Naive thymus-derived CD4-positive, alpha-beta T cell (primary cell): ENCODE measurements at regions of chr10 and their contacts with region 1.

Region 1: DNA sequence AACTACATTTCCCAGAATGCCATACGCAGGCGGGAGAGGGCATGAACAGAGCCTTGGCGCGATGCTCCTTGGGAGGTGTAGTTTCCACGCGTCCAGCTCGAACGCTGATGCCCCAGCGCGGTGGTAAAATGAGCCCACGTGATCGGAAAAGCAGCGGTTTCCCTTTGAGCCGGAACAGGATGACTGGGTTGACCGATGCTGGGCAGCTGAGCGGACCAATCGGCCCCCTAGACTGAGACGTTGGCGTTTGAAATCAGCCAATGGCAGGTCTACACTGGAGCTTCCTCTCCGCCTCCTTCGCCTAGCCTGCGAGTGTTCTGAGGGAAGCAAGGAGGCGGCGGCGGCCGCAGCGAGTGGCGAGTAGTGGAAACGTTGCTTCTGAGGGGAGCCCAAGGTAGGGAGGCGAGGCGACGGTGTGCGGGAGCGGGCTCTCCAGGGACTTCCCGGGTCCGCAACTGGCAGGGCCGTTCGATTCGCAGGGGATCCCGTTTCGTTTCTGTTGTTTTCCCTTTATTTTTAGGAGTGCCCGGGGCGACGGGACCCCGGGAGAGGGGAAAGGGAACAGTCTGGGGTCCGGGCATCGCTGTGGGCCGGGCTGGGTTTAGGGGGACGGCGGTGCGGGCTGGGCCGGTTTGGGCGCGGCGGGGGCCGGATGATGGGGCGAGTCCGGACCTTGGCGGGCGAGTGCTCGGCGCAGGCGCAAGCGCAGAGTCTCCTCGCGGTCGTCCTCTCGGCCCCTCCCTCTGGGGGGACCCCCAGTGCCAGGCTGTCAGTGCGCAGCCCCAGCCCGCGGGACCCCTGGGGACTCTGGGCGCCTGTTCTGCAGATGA is at the start of gene BUB3:
- DNase-seq: peak; percentile 72 to 96 (median 94)
- ATAC-seq: peak; percentile 95
- H3K4me3 ChIP-seq: peak within 1 kb of the TSS; percentile 92
- H3K4me3 Mint-ChIP-seq: peak within 1 kb of the TSS; percentile 93 to 100 (median 99)
- H3K27ac ChIP-seq: peak within 1 kb of the TSS; percentile 80
- H3K27ac Mint-ChIP-seq: peak within 1 kb of the TSS; percentile 85 to 100 (median 96)
- H3K4me1 ChIP-seq: peaks cover 28 to 66% of the 10 kb centered on the region in 2 donors
- H3K4me1 Mint-ChIP-seq: peaks cover 35 to 85% (median 75%) of the 10 kb centered on the region in 7 donors
- H3K27me3 ChIP-seq: peaks cover 4 to 5% of the 10 kb centered on the region in 2 donors
- H3K27me3 Mint-ChIP-seq: peaks cover under 1 to 30% (median 7%) of the 10 kb centered on the region in 5 donors
- total RNA-seq, gene BUB3: 91.4 to 195 (median 171) TPM

Region 2: DNA sequence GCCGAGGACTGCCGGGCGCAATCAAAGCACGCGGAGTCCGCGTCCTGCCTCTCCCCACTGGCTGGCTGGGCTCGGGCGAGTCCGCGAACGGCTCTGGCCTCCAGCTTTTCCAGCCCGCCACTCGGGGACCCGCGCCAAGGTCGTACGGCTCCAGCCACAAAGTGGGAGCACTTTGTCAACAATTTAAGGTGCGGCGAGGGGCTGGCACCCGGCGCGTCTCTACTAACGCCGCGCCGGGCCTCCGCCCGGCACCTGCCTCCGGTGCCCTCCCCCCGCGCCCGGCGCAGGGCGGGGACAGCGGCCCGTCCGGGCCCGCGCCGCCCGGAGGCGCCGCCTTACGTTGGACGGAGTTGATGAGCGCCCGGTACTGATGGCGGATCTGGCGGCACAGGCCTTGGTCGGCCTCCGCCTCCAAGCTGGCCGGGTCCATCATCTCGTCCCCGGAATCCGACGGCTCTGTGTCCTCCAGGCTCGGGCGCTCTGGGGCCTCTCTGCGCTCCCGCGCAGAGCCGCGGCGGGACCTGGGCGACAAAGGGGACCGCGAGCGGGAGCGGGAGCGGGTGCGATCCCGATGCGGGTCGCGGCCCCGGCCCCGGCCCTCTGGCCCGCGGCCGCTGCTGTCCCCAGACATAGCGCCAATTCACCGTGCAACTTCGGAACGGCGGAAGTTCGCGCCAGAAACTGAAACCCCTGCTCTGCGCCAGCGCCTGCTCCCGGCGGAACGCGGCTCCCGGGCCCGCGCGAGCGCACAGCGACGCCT is 1179.6 kb before region 1 on chr10 and contains the start of gene NSMCE4A:
- CTCF ChIA-PET with region 1: no interaction called
- POLR2A ChIA-PET with region 1: no interaction called
- intact Hi-C with region 1: loop called in 1 of 2 experiments (anchors 5 kb)
- DNase-seq: peak; percentile 47 to 81 (median 62)
- ATAC-seq: peak; percentile 90
- H3K4me3 ChIP-seq: peak within 1 kb of the TSS; percentile 86
- H3K4me3 Mint-ChIP-seq: peak within 1 kb of the TSS; percentile 72 to 86 (median 81)
- H3K27ac ChIP-seq: peak within 1 kb of the TSS; percentile 74
- H3K27ac Mint-ChIP-seq: peak within 1 kb of the TSS in 6 of 9 donors; percentile 36 to 77 (median 60)
- H3K4me1 ChIP-seq: peaks cover 6 to 11% of the 10 kb centered on the region in 2 donors
- H3K4me1 Mint-ChIP-seq: peaks cover 15 to 35% (median 22%) of the 10 kb centered on the region in 7 donors
- H3K27me3 ChIP-seq: no peaks in the 10 kb centered on the region
- H3K27me3 Mint-ChIP-seq: no peaks in the 10 kb centered on the region
- total RNA-seq, gene NSMCE4A: 34.7 to 87.2 (median 69.4) TPM

Region 3: DNA sequence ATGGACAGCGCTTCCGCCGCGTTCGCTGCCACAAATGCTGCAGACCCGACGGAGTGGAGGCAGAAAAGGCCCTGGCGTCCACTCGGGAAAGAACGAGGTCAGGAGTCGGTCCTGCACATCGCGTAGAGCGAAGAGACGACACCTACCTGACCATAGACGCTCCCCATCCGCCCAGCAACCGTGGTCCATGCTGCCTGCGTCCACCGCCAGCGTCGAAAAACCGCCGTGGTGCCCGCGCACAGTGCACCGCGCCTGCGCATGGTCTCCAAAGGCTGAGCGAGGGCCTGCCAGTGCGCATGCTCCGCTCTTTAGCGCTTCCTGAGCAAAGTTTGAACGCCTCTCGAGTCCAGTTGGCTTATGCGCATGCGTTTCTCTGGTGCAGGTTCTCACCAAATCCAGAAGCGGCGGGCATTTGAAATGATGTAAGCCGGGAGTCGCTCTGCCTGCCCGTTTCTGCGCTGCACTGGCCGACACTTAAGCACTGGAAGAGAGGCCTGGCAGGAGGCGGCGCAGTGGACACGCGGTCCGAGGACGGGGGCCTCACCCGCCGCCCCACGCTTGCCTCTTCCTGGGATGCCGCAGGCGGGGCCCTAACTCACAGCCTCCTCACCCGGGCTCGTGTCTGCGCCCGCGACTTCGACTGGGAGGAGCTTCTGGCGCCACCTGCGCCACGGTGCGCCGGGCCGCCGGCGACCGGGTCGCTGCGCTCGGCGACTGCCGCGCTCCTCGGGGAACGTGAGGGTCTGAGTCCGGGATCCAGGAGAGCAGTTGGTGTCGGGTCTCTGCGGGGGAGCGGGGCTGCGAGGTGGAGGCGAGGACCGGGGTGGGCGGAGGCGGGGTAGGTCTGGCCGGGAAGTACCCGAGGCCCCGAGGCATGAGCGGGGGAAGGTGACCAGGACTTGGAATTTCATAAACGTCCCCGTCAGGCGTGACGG is 274.7 kb before region 1 on chr10 and contains the start of gene FAM24B:
- CTCF ChIA-PET with region 1: no interaction called
- POLR2A ChIA-PET with region 1: no interaction called
- intact Hi-C with region 1: loop called (anchors 1 to 2 kb)
- DNase-seq: peak; percentile 84 to 96 (median 94)
- ATAC-seq: peak; percentile 93
- H3K4me3 ChIP-seq: peak within 1 kb of the TSS; percentile 81
- H3K4me3 Mint-ChIP-seq: peak within 1 kb of the TSS; percentile 86 to 99 (median 92)
- H3K27ac ChIP-seq: peak within 1 kb of the TSS; percentile 77
- H3K27ac Mint-ChIP-seq: peak within 1 kb of the TSS; percentile 85 to 96 (median 92)
- H3K4me1 ChIP-seq: peaks cover 18 to 21% of the 10 kb centered on the region in 2 donors
- H3K4me1 Mint-ChIP-seq: peaks cover 31 to 65% (median 54%) of the 10 kb centered on the region in 7 donors
- H3K27me3 ChIP-seq: no peaks in the 10 kb centered on the region
- H3K27me3 Mint-ChIP-seq: no peaks in the 10 kb centered on the region
- total RNA-seq, gene FAM24B: 9.9 to 13.5 (median 11.4) TPM

Region 4: GRCh38 chr10:122980209-122981065 is 173.9 kb before region 1 on chr10 and contains the start of gene PSTK:
- CTCF ChIA-PET with region 1: interaction called, 4 read pairs
- POLR2A ChIA-PET with region 1: interaction called, 4 read pairs
- intact Hi-C with region 1: loop called in 1 of 2 experiments (anchors 1 kb)
- DNase-seq: peak; percentile 84 to 90 (median 88)
- ATAC-seq: peak; percentile 97
- H3K4me3 ChIP-seq: peak within 1 kb of the TSS; percentile 67
- H3K4me3 Mint-ChIP-seq: peak within 1 kb of the TSS; percentile 87 to 95 (median 91)
- H3K27ac ChIP-seq: peak within 1 kb of the TSS; percentile 89
- H3K27ac Mint-ChIP-seq: peak within 1 kb of the TSS; percentile 89 to 98 (median 96)
- H3K4me1 ChIP-seq: peaks cover 7 to 14% of the 10 kb centered on the region in 2 donors
- H3K4me1 Mint-ChIP-seq: peaks cover 15 to 29% (median 24%) of the 10 kb centered on the region in 7 donors
- H3K27me3 ChIP-seq: no peaks in the 10 kb centered on the region
- H3K27me3 Mint-ChIP-seq: peaks cover 0 to 13% (median 0%) of the 10 kb centered on the region in 5 donors
- total RNA-seq, gene PSTK: 4.3 to 13.2 (median 5.9) TPM

Region 5: DNA sequence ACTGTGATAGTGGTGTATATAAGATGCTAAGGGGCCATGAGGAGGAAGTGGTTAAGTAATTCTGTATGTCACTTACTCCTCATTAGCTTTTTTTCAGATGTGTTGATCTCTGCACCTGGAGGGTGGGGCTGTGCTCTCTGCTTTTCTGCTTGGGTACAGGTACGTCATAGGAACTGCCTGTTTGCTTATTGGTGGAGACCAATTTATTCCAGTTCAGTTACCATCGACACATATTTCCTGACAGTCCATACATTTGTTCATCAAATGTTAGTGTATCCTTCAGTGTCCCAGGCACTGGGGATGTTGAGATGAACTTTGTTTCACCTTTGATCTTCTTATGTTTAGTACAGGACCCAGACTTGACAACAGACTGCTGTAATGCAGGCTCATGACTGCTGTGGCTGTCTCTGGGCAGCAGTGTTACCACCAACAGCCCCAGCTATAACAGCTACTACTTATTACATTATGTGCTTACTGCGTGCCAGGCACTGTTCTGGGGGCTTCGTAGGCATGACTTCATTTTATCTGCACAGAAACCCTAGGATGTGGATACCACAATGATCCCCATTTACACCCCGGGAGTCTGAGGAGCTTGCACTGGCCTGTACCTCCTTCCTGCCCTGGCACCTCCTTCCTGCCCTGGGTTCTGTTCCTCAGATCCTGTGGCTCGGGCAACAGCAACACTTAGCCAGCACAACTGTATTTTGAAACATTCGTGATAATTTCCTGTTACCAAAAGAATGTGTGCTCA is 87.3 kb after region 1 on chr10:
- CTCF ChIA-PET with region 1: interaction called, 9 read pairs
- POLR2A ChIA-PET with region 1: interaction called, 31 read pairs
- intact Hi-C with region 1: loop called (anchors 1 to 5 kb)
- DNase-seq: peak; percentile 18 to 92 (median 87)
- ATAC-seq: peak; percentile 95
- H3K4me3 ChIP-seq: peak overlapping the region; percentile 29
- H3K4me3 Mint-ChIP-seq: peak overlapping the region; percentile 46 to 87 (median 74)
- H3K27ac ChIP-seq: peak overlapping the region; percentile 85
- H3K27ac Mint-ChIP-seq: peak overlapping the region; percentile 92 to 100 (median 98)
- H3K4me1 ChIP-seq: peaks cover 24 to 25% of the 10 kb centered on the region in 2 donors
- H3K4me1 Mint-ChIP-seq: peaks cover 10 to 43% (median 42%) of the 10 kb centered on the region in 7 donors
- H3K27me3 ChIP-seq: no peaks in the 10 kb centered on the region
- H3K27me3 Mint-ChIP-seq: no peaks in the 10 kb centered on the region

Region 6: DNA sequence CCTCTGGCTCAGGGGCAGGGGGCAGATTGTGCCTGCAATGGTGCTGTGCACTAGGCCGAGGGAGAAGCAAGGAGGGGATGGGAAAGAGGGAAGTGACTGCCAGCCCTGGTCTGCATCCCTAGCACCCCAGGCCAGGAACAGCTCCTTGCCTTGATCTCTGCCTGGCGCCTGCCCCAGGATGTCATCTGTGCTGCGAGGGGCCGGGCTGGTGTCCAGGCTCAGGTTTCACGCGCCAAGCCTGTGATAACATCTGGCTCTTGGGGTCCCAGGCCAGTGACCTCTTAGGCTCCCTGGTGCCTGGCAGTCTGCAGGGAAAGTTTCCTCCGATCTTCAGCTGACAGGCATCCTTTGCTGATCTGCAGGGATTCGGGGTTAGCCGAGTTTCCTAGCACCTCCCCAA is 318.3 kb after region 1 on chr10:
- CTCF ChIA-PET with region 1: no interaction called
- POLR2A ChIA-PET with region 1: no interaction called
- intact Hi-C with region 1: no loop called
- DNase-seq: no peak
- ATAC-seq: no peak
- H3K4me3 ChIP-seq: no peak overlapping the region
- H3K4me3 Mint-ChIP-seq: no peak overlapping the region
- H3K27ac ChIP-seq: no peak overlapping the region
- H3K27ac Mint-ChIP-seq: no peak overlapping the region
- H3K4me1 ChIP-seq: no peaks in the 10 kb centered on the region
- H3K4me1 Mint-ChIP-seq: no peaks in the 10 kb centered on the region
- H3K27me3 ChIP-seq: peaks cover 0 to 3% of the 10 kb centered on the region in 2 donors
- H3K27me3 Mint-ChIP-seq: peaks cover 4 to 18% (median 13%) of the 10 kb centered on the region in 5 donors

Region 7: DNA sequence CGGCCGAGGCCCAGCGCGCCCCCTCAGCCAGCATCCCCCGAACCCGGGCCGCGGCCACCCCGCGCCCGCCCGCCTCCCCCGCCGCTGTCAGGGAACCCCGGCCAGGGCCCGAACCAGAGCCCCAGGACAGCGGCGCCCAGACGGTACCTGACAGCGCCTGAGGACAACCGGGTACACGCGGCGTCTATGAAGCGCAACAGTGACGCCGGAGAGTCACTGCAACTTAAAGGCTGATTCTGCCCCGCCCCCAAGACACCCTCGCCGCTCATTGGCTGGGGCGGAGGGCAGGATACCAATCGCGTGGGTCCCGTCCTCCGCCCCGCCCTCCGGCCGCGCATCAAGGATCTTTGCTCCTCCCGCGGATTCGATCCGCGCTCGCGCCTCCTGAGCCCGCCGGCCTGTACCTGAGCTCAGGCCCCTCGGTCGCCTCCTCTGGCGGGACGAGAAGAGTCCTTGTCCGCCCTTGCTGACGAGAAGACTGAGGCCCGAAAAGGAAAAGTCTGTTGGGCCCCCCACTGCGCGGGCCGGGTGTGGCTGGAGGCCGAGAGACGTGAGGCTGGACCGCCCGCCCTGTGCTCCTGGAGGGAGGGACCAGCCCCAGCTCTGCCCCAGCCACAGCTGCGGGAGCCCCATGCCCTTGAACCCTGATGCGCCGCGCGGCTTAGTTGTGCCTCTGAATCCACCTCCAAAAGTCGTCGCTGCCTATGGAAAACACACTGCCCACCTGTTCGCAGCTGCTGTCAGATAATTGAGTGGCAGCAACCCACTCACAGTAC is 1264.6 kb after region 1 on chr10 and contains the start of gene OAT:
- CTCF ChIA-PET with region 1: no interaction called
- POLR2A ChIA-PET with region 1: no interaction called
- intact Hi-C with region 1: loop called (anchors 1 to 2 kb)
- DNase-seq: peak; percentile 90 to 96 (median 94)
- ATAC-seq: peak; percentile 99
- H3K4me3 ChIP-seq: peak within 1 kb of the TSS; percentile 76
- H3K4me3 Mint-ChIP-seq: peak within 1 kb of the TSS; percentile 80 to 91 (median 84)
- H3K27ac ChIP-seq: peak within 1 kb of the TSS; percentile 80
- H3K27ac Mint-ChIP-seq: peak within 1 kb of the TSS in 8 of 9 donors; percentile 31 to 90 (median 83)
- H3K4me1 ChIP-seq: peaks cover 8 to 10% of the 10 kb centered on the region in 2 donors
- H3K4me1 Mint-ChIP-seq: peaks cover 8 to 41% (median 31%) of the 10 kb centered on the region in 7 donors
- H3K27me3 ChIP-seq: no peaks in the 10 kb centered on the region
- H3K27me3 Mint-ChIP-seq: peaks cover 0 to 18% (median 2%) of the 10 kb centered on the region in 5 donors
- total RNA-seq, gene OAT: 29.6 to 47.0 (median 39.1) TPM

Region 8: GRCh38 chr10:124802313-124802675 is 1648.0 kb after region 1 on chr10:
- CTCF ChIA-PET with region 1: no interaction called
- POLR2A ChIA-PET with region 1: no interaction called
- intact Hi-C with region 1: loop called in 1 of 2 experiments (anchors 1 kb)
- DNase-seq: peak in 1 of 9 donors; percentile 16
- ATAC-seq: peak; percentile 28
- H3K4me3 ChIP-seq: peak overlapping the region; percentile 97
- H3K4me3 Mint-ChIP-seq: peak overlapping the region; percentile 85 to 96 (median 88)
- H3K27ac ChIP-seq: peak overlapping the region; percentile 90
- H3K27ac Mint-ChIP-seq: peak overlapping the region; percentile 55 to 95 (median 88)
- H3K4me1 ChIP-seq: peaks cover 0 to 5% of the 10 kb centered on the region in 2 donors
- H3K4me1 Mint-ChIP-seq: peaks cover 9 to 24% (median 17%) of the 10 kb centered on the region in 7 donors
- H3K27me3 ChIP-seq: no peaks in the 10 kb centered on the region
- H3K27me3 Mint-ChIP-seq: peaks cover 0 to 12% (median 4%) of the 10 kb centered on the region in 5 donors